Activated naive CD4-positive, alpha-beta T cell treated with anti-CD3 and anti-CD28 coated beads for 36 hours (primary cell): ENCODE measurements at regions of chr9 and their contacts with region 1.

Region 1: GRCh38 chr9:111916234-111916645 is 19.6 kb downstream of the UGCG start:
- DNase-seq: peak; percentile 45
- H3K4me3 Mint-ChIP-seq: no peak overlapping the region
- H3K27ac Mint-ChIP-seq: peak overlapping the region; percentile 81
- H3K4me1 Mint-ChIP-seq: peaks cover 53% of the 10 kb centered on the region
- H3K27me3 Mint-ChIP-seq: no peaks in the 10 kb centered on the region

Region 2: GRCh38 chr9:111631071-111631971 is 284.9 kb before region 1 on chr9 and contains the start of gene DNAJC25:
- CTCF ChIA-PET with region 1: no interaction called
- intact Hi-C with region 1: loop called (anchors 5 kb)
- DNase-seq: peak; percentile 97
- H3K4me3 Mint-ChIP-seq: peak within 1 kb of the TSS; percentile 92
- H3K27ac Mint-ChIP-seq: peak within 1 kb of the TSS; percentile 79
- H3K4me1 Mint-ChIP-seq: peaks cover 42% of the 10 kb centered on the region
- H3K27me3 Mint-ChIP-seq: no peaks in the 10 kb centered on the region
- total RNA-seq, gene DNAJC25: 3.4 to 3.9 TPM

Region 3: DNA sequence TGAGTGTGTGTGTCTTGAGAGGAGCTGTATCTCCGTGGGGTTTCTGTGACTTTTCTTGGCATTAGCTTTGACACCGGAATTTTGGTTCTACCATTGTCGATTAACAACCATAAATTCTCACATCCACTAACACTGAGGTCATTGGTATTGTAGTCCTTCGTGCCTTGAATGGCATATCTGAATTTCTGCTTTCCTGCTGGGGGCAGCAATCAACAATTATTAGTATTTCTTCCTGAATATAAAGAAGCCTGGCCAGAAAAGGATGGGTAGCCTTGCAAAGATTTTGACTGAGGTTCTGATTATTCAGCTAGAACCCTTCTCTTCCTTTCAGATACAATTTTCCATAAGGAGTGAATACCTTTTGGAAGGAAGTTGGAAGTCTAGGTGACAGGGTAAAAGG is 88.0 kb before region 1 on chr9:
- CTCF ChIA-PET with region 1: no interaction called
- intact Hi-C with region 1: no loop called
- DNase-seq: no peak
- H3K4me3 Mint-ChIP-seq: no peak overlapping the region
- H3K27ac Mint-ChIP-seq: no peak overlapping the region
- H3K4me1 Mint-ChIP-seq: no peaks in the 10 kb centered on the region
- H3K27me3 Mint-ChIP-seq: no peaks in the 10 kb centered on the region

Region 4: GRCh38 chr9:111926421-111926875 is 10.2 kb after region 1 on chr9:
- CTCF ChIA-PET with region 1: interaction called, 3 read pairs
- intact Hi-C with region 1: loop called (anchors 1 kb)
- DNase-seq: peak; percentile 70
- H3K4me3 Mint-ChIP-seq: no peak overlapping the region
- H3K27ac Mint-ChIP-seq: peak overlapping the region; percentile 46
- H3K4me1 Mint-ChIP-seq: peaks cover 25% of the 10 kb centered on the region
- H3K27me3 Mint-ChIP-seq: no peaks in the 10 kb centered on the region

Region 5: GRCh38 chr9:111965566-111966019 is 49.4 kb after region 1 on chr9:
- CTCF ChIA-PET with region 1: no interaction called
- intact Hi-C with region 1: loop called (anchors 1 kb)
- DNase-seq: peak; percentile 55
- H3K4me3 Mint-ChIP-seq: no peak overlapping the region
- H3K27ac Mint-ChIP-seq: no peak overlapping the region
- H3K4me1 Mint-ChIP-seq: peaks cover 5% of the 10 kb centered on the region
- H3K27me3 Mint-ChIP-seq: no peaks in the 10 kb centered on the region

Region 6: GRCh38 chr9:112037281-112038016 is 121.2 kb after region 1 on chr9:
- CTCF ChIA-PET with region 1: interaction called, 5 read pairs
- intact Hi-C with region 1: loop called (anchors 1 kb)
- DNase-seq: peak; percentile 79
- H3K4me3 Mint-ChIP-seq: no peak overlapping the region
- H3K27ac Mint-ChIP-seq: peak overlapping the region; percentile 76
- H3K4me1 Mint-ChIP-seq: peaks cover 45% of the 10 kb centered on the region
- H3K27me3 Mint-ChIP-seq: peaks cover 4% of the 10 kb centered on the region

Region 7: DNA sequence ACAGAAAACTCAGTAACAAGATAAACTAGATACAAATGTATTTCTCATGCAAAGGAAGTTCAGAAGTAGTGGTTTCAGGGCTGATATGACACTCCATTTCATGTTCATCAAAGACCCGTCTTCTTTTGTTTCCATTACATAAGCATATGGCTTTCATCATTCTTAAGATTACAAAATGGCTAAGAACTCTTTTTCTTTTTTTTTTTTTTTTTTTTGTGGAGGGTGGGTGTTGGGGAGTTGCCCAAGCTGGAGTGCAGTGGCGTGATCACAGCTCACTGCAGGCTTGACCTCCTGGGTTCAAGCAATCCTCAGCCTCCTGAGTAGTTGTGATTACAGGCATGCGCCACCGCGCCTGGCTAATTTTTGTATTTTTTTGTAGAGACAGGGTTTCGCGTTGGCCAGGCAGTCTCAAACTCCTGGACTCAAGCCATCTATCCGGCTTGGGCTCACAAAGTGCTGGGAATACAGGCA is 439.2 kb after region 1 on chr9:
- CTCF ChIA-PET with region 1: no interaction called
- intact Hi-C with region 1: loop called (anchors 5 kb)
- DNase-seq: peak; percentile 18
- H3K4me3 Mint-ChIP-seq: no peak overlapping the region
- H3K27ac Mint-ChIP-seq: peak overlapping the region; percentile 34
- H3K4me1 Mint-ChIP-seq: peaks cover 31% of the 10 kb centered on the region
- H3K27me3 Mint-ChIP-seq: no peaks in the 10 kb centered on the region